MCF 10A (cell line): ENCODE measurements at regions of chr1 and their contacts with region 1.

Region 1: GRCh38 chr1:165367375-165367993 is 11.0 kb upstream of the LMX1A start:
- DNase-seq: peak; percentile 89
- H3K4me3 Mint-ChIP-seq: no peak overlapping the region
- H3K27ac Mint-ChIP-seq: no peak overlapping the region
- H3K4me1 Mint-ChIP-seq: peaks cover 23% of the 10 kb centered on the region
- H3K27me3 Mint-ChIP-seq: peaks cover 38% of the 10 kb centered on the region
- CTCF ChIP-seq: peak; percentile 99

Region 2: GRCh38 chr1:165144757-165145397 is 222.6 kb before region 1 on chr1:
- CTCF ChIA-PET with region 1: interaction called, 334 read pairs
- POLR2A ChIA-PET with region 1: no interaction called
- intact Hi-C with region 1: loop called (anchors 1 kb)
- DNase-seq: peak; percentile 81
- H3K4me3 Mint-ChIP-seq: no peak overlapping the region
- H3K27ac Mint-ChIP-seq: no peak overlapping the region
- H3K4me1 Mint-ChIP-seq: peaks cover 6% of the 10 kb centered on the region
- H3K27me3 Mint-ChIP-seq: peaks cover 52% of the 10 kb centered on the region
- CTCF ChIP-seq: peak; percentile 91

Region 3: GRCh38 chr1:165228676-165229075 is 138.8 kb before region 1 on chr1:
- CTCF ChIA-PET with region 1: interaction called, 42 read pairs
- POLR2A ChIA-PET with region 1: no interaction called
- intact Hi-C with region 1: no loop called
- DNase-seq: peak; percentile 39
- H3K4me3 Mint-ChIP-seq: no peak overlapping the region
- H3K27ac Mint-ChIP-seq: no peak overlapping the region
- H3K4me1 Mint-ChIP-seq: no peaks in the 10 kb centered on the region
- H3K27me3 Mint-ChIP-seq: peaks cover 21% of the 10 kb centered on the region
- CTCF ChIP-seq: no peak

Region 4: DNA sequence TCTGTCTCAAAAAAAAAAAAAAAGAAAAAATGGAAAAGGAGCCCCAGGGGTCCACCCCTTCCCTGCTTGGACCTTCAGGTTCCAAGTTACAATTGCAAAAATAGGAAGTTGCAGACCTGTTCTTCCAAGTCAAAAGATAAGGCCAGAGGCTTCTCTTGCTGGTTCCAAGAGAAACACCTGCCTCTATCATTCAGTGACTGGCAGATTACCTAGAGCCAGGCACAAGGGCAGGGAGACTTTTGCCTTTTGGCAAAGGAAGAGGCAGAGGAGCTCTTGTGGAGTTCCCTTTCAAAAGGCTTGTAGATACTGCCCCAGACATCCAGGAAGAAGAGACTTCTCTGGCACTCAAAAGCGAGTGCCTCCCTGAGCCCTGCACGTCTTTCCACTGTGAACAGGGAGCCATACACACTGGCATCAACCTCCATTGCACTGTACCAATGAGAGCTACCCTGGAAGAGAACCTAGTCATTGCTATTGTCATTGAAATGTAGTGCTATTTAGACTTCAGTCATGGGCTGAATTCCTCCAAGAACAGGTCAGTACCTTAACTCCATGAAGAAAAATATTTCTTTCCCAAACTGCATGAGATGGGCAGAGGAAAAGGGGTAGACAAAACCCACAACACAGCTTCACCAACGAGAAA is 102.2 kb before region 1 on chr1:
- CTCF ChIA-PET with region 1: interaction called, 536 read pairs
- POLR2A ChIA-PET with region 1: no interaction called
- intact Hi-C with region 1: no loop called
- DNase-seq: no peak
- H3K4me3 Mint-ChIP-seq: no peak overlapping the region
- H3K27ac Mint-ChIP-seq: no peak overlapping the region
- H3K4me1 Mint-ChIP-seq: no peaks in the 10 kb centered on the region
- H3K27me3 Mint-ChIP-seq: peaks cover 40% of the 10 kb centered on the region
- CTCF ChIP-seq: no peak

Region 5: DNA sequence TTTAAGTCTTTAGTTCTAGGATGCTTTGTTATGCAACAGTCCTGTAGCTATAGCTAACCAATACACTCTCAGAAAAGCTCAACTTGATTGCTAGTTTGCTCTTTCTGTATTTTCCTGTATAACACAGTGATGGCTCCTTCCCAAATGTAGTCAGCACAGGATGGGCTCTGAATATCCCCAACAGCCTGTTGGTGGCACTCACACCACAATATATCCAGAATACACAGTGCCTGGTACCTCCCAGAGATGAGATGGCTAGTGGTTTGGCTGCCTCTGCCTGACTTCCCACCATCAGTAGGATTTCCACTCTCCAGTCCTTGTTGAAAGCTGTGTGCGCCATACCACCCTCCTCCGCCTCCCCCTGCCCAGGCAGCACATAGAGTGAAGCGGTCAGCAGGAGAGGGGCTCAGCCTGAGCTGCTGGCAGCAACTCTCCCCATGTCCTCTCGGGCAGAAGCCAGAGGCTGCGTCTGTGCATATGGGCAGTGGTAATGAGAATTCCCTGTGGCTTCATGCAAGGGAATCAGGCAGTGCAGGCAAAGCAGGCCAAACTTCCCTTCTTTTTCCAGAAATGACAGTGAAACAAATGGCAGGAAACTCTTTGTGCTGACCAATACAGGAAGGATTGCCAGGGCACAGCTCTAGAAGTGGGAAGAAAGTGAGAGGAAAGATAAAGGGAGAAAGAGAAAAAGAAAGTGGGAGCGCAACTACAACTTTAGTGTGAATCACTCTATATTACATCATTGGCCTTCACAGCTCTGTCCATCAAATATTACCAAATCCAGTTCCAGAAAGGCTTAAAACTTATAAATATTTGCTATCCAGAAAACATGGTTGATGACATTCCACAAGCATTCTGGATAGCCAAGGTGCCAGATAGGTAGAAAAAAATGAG is 60.7 kb before region 1 on chr1:
- CTCF ChIA-PET with region 1: interaction called, 52 read pairs
- POLR2A ChIA-PET with region 1: no interaction called
- intact Hi-C with region 1: no loop called
- DNase-seq: peak; percentile 21
- H3K4me3 Mint-ChIP-seq: no peak overlapping the region
- H3K27ac Mint-ChIP-seq: no peak overlapping the region
- H3K4me1 Mint-ChIP-seq: peaks cover 4% of the 10 kb centered on the region
- H3K27me3 Mint-ChIP-seq: peaks cover 49% of the 10 kb centered on the region
- CTCF ChIP-seq: no peak

Region 6: DNA sequence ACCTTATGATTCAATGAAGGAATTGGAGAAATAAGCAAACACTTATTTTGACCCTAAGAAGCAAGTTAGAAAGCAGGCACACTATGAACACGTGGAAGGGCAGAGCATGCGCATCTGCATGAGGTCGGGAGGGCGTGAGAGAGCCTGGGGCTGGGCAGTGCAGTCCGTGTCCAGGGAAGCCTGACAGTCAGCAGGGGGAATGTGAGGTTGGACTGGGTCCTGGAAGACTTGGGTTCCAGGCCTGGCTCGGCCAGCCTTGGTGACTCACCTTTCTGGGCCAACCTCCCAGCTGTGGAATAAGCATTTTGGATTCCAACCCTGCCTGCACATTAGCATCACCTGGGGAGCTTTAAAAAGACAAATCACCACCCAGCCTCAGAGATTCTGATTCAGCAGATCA is 15.6 kb after region 1 on chr1:
- CTCF ChIA-PET with region 1: interaction called, 162 read pairs
- POLR2A ChIA-PET with region 1: interaction called, 13 read pairs
- intact Hi-C with region 1: no loop called
- DNase-seq: peak; percentile 95
- H3K4me3 Mint-ChIP-seq: no peak overlapping the region
- H3K27ac Mint-ChIP-seq: peak overlapping the region; percentile 5
- H3K4me1 Mint-ChIP-seq: peaks cover 19% of the 10 kb centered on the region
- H3K27me3 Mint-ChIP-seq: peaks cover 22% of the 10 kb centered on the region
- CTCF ChIP-seq: no peak

Region 7: GRCh38 chr1:165516469-165516868 is 149.0 kb after region 1 on chr1:
- CTCF ChIA-PET with region 1: no interaction called
- POLR2A ChIA-PET with region 1: no interaction called
- intact Hi-C with region 1: no loop called
- DNase-seq: no peak
- H3K4me3 Mint-ChIP-seq: no peak overlapping the region
- H3K27ac Mint-ChIP-seq: no peak overlapping the region
- H3K4me1 Mint-ChIP-seq: no peaks in the 10 kb centered on the region
- H3K27me3 Mint-ChIP-seq: peaks cover 46% of the 10 kb centered on the region
- CTCF ChIP-seq: no peak